T-cell (primary cell): ENCODE measurements at regions of chr7 and their contacts with region 1.

Region 1: GRCh38 chr7:7640221-7641128 is at the start of gene UMAD1:
- DNase-seq: peak; percentile 94 to 100 (median 99)
- ATAC-seq: peak; percentile 93 to 96 (median 96)
- H3K4me3 ChIP-seq: peak within 1 kb of the TSS; percentile 72 to 99
- H3K4me3 Mint-ChIP-seq: peak within 1 kb of the TSS; percentile 97 to 98 (median 97)
- H3K27ac ChIP-seq: peak within 1 kb of the TSS; percentile 95
- H3K27ac Mint-ChIP-seq: peak within 1 kb of the TSS; percentile 91 to 98
- H3K4me1 ChIP-seq: peaks cover 14 to 15% of the 10 kb centered on the region in 2 experiments
- H3K4me1 Mint-ChIP-seq: peaks cover 52 to 58% (median 53%) of the 10 kb centered on the region in 3 donors
- H3K27me3 ChIP-seq: no peaks in the 10 kb centered on the region
- H3K27me3 Mint-ChIP-seq: no peaks in the 10 kb centered on the region
- total RNA-seq, gene UMAD1: 13.8 to 19.8 (median 16.6) TPM

Region 2: DNA sequence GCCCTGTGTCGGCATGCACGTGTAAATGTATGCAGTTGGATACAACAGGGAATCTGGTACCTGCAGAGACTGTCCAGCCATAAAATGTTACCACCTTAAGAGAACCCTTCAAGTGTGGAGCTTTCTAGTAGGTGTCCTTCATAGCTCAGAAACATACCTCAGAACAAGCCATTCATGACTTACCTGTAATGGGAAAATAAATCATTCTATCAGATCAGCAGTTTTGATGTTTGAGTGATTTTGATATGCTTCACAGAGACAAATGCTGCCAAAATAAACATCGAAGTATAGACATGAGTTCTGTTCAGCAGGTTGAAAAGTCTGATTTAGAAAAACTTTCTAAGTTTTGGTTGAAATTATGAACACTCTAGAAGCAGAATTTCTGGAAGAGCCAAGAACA is 33.5 kb before region 1 on chr7:
- CTCF ChIA-PET with region 1: no interaction called
- POLR2A ChIA-PET with region 1: no interaction called
- DNase-seq: no peak
- ATAC-seq: no peak
- H3K4me3 ChIP-seq: no peak overlapping the region
- H3K4me3 Mint-ChIP-seq: no peak overlapping the region
- H3K27ac ChIP-seq: no peak overlapping the region
- H3K27ac Mint-ChIP-seq: no peak overlapping the region
- H3K4me1 ChIP-seq: no peaks in the 10 kb centered on the region
- H3K4me1 Mint-ChIP-seq: no peaks in the 10 kb centered on the region
- H3K27me3 ChIP-seq: no peaks in the 10 kb centered on the region
- H3K27me3 Mint-ChIP-seq: no peaks in the 10 kb centered on the region

Region 3: GRCh38 chr7:7664291-7664690 is 23.8 kb after region 1 on chr7:
- CTCF ChIA-PET with region 1: no interaction called
- POLR2A ChIA-PET with region 1: interaction called in 1 of 2 experiments, 15 read pairs
- DNase-seq: no peak
- ATAC-seq: no peak
- H3K4me3 ChIP-seq: no peak overlapping the region
- H3K4me3 Mint-ChIP-seq: no peak overlapping the region
- H3K27ac ChIP-seq: no peak overlapping the region
- H3K27ac Mint-ChIP-seq: peak overlapping the region in 1 of 2 donors; percentile 6
- H3K4me1 ChIP-seq: peaks cover 0 to 2% of the 10 kb centered on the region in 2 experiments
- H3K4me1 Mint-ChIP-seq: peaks cover 43 to 55% (median 50%) of the 10 kb centered on the region in 3 donors
- H3K27me3 ChIP-seq: no peaks in the 10 kb centered on the region
- H3K27me3 Mint-ChIP-seq: no peaks in the 10 kb centered on the region

Region 4: GRCh38 chr7:7732566-7733290 is 92.3 kb after region 1 on chr7:
- CTCF ChIA-PET with region 1: no interaction called
- POLR2A ChIA-PET with region 1: no interaction called
- DNase-seq: no peak
- ATAC-seq: no peak
- H3K4me3 ChIP-seq: no peak overlapping the region
- H3K4me3 Mint-ChIP-seq: no peak overlapping the region
- H3K27ac ChIP-seq: no peak overlapping the region
- H3K27ac Mint-ChIP-seq: no peak overlapping the region
- H3K4me1 ChIP-seq: no peaks in the 10 kb centered on the region
- H3K4me1 Mint-ChIP-seq: peaks cover 0 to 14% (median 2%) of the 10 kb centered on the region in 3 donors
- H3K27me3 ChIP-seq: no peaks in the 10 kb centered on the region
- H3K27me3 Mint-ChIP-seq: no peaks in the 10 kb centered on the region

Region 5: DNA sequence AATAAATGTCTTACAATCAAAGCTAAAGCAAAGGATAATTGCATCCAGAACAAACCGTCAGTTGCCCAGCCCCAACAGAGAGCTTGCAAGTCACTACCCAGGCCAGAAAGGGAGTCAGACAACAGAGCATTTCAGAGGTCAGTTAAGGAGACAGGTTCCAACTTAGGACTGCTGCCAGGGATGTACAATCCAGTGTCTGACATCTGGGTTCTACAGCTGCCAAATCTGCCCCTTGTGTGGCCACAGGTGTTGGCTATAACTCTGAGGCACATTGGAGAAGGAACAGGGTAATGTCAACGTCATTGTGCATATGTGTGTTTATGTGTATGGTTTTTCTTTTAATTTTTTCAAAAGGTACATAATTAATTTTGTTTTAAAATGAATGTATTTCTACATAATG is 242.9 kb after region 1 on chr7:
- CTCF ChIA-PET with region 1: no interaction called
- POLR2A ChIA-PET with region 1: no interaction called
- DNase-seq: no peak
- ATAC-seq: no peak
- H3K4me3 ChIP-seq: no peak overlapping the region
- H3K4me3 Mint-ChIP-seq: no peak overlapping the region
- H3K27ac ChIP-seq: no peak overlapping the region
- H3K27ac Mint-ChIP-seq: no peak overlapping the region
- H3K4me1 ChIP-seq: no peaks in the 10 kb centered on the region
- H3K4me1 Mint-ChIP-seq: peaks cover 0 to 2% (median 0%) of the 10 kb centered on the region in 3 donors
- H3K27me3 ChIP-seq: no peaks in the 10 kb centered on the region
- H3K27me3 Mint-ChIP-seq: no peaks in the 10 kb centered on the region